Mucosa of descending colon (tissue), 3 donors: ENCODE measurements at regions of chr2 and their contacts with region 1.

Region 1: DNA sequence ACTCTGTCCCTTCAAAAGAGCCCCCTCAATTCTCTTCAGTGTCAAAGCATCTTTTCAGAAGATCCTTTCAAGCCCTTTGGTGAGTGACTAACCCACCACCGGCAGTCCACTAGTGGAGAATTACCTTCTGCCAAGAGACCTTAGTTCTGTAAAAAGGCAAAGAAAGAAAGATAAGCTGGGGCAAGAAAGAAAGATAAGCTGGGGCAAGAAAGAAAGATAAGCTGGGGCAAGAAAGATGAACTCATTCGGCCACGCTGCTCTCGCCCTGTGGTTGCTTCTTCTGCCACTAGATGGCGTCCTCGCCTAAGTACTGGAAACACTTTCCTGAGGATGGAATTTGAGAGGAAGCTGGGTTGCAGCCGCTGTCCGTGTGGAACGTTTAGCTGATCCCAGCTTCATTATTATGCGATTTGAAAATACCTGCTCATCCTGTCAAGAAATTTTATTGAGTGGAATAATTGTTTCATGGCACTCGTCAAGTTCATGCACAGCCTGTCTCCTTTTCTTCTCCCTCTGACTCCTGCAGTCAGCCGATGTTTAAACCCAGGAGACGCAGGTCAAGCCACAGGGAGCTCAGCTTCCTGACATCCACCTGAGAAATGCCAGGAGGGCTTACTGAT is 17.3 kb upstream of the ANXA4 start:
- DNase-seq: peak; percentile 76 to 97 (median 89)
- ATAC-seq: peak; percentile 99
- H3K4me3 ChIP-seq: no peak overlapping the region
- H3K4me1 ChIP-seq: no peaks in the 10 kb centered on the region
- CTCF ChIP-seq: peak; percentile 93

Region 2: DNA sequence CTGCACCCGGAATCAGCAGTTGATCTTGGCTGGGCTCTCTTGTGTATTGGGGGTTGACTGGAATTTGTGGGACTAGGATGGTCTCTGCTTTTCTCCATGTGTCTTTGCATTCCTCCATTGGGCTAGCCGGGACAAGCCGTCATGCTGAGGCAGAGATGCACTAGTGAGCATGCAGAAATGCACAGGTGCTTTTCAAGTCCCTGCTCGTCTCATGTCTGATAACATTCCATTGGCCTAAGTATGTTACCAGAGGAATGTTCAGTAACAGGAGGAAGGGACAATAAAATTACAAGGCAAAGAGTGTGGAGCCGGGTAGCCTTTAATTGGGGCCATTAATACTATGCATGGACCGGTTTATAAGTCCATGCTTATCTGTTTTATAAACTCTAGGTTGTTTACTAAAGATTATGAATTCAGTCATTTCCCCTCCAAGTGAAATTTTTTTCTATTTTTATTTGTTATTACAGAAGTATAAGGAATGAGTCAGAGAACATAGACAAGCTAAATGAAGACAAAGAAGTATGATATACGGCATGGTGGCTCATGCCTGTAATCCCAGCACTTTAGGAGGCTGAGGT is 56.8 kb before region 1 on chr2:
- intact Hi-C with region 1: no loop called
- DNase-seq: no peak
- ATAC-seq: no peak
- H3K4me3 ChIP-seq: no peak overlapping the region
- H3K4me1 ChIP-seq: no peaks in the 10 kb centered on the region
- CTCF ChIP-seq: no peak

Region 3: GRCh38 chr2:69816923-69817542 is 92.4 kb after region 1 on chr2:
- intact Hi-C with region 1: loop called (anchors 2 kb)
- DNase-seq: peak in 1 of 3 donors; percentile 88
- ATAC-seq: peak; percentile 97
- H3K4me3 ChIP-seq: no peak overlapping the region
- H3K4me1 ChIP-seq: no peaks in the 10 kb centered on the region
- CTCF ChIP-seq: peak; percentile 88